Activated T-helper 2 cell treated with anti-CD3 and anti-CD28 coated beads, Interferon-gamma antibody, Interleukin-2, Interleukin-4, amounts not matched to agents 10 μg/mL and 5 μg/mL and 100 μg/mL, durations not matched to agents 14 hours and 24 hours and 36 hours (primary cell): ENCODE measurements at regions of chr10 and their contacts with region 1.

Region 1: DNA sequence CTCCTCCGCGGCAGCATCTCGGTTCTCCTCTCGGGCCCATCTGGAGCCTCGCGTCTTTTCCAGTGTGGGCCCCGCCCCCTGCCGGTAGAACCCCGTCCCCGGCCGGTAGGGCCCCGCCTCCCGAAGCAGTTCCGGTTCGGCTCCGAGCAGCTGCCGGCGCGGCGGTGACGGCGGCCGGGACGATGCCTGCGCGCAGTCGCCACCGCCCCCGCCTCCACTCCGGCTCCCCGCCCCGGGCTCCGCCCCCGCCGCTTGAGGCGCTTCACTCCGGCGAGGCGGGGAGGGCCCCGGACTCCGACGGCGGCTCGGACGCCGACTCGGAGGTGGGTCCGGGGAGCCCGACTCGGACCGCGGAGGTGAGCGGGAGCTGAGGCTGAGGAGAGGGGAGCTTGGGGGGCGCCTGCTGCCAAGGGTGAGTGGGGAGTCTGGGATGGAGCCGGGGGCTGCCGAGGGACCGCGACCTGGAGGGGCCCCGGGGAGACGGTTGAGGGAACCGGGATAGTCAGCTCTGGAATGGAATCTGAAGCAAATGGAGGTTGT is at the start of gene SAMD8:
- DNase-seq: peak; percentile 97
- H3K4me3 Mint-ChIP-seq: peak within 1 kb of the TSS; percentile 89
- H3K27ac Mint-ChIP-seq: peak within 1 kb of the TSS; percentile 90
- H3K4me1 Mint-ChIP-seq: peaks cover 43% of the 10 kb centered on the region
- H3K27me3 Mint-ChIP-seq: no peaks in the 10 kb centered on the region
- total RNA-seq, gene SAMD8: 14.9 and 15.6 TPM in 2 replicates

Region 2: GRCh38 chr10:74176380-74177139 is 934.9 kb before region 1 on chr10:
- intact Hi-C with region 1: loop called (anchors 5 kb)
- DNase-seq: peak; percentile 96
- H3K4me3 Mint-ChIP-seq: peak overlapping the region; percentile 92
- H3K27ac Mint-ChIP-seq: peak overlapping the region; percentile 97
- H3K4me1 Mint-ChIP-seq: peaks cover 43% of the 10 kb centered on the region
- H3K27me3 Mint-ChIP-seq: no peaks in the 10 kb centered on the region

Region 3: DNA sequence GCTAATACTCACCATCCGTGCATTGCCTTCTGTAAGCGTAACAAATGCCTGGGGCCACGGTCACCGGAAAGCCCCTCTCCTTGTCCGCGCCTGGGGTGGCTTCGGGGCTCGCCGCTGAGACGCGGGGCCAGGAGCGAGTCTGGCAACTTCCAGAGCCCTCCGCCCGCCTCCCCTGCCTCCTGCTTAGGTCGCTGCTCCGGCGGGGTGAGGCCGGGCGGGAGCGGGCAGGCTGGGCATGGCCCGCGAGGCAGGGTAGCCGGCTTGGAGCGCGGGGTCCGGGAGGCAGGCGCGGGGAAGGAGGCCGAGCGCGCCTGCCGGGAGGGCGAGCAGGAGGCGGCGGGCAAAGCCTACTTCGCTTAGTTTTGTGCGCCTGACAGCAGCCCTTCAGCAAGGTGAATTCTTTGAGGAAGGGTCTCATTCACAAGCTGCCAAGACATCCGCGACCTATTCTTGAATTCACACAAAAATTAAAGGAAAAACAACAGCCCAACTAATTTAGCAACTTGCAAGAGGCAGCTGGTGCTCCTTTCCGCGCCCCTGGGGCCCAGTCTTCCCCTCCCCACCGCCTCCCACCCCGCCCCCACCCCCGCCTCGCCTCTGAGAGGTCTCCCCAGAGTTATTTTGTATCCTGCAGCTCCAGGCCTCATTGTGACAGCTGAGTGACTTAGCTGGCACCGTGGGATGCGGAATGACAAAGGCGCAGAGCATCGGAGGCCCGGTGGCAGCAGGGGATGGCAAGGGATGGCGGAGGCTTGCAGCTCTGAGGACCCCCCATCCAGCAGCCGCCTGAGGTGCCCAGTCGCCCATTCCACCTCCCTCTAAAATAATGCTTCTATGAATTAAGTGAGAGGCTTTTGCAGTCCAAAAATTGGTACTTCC is 297.8 kb before region 1 on chr10:
- intact Hi-C with region 1: no loop called
- DNase-seq: no peak
- H3K4me3 Mint-ChIP-seq: no peak overlapping the region
- H3K27ac Mint-ChIP-seq: no peak overlapping the region
- H3K4me1 Mint-ChIP-seq: peaks cover 6% of the 10 kb centered on the region
- H3K27me3 Mint-ChIP-seq: no peaks in the 10 kb centered on the region

Region 4: DNA sequence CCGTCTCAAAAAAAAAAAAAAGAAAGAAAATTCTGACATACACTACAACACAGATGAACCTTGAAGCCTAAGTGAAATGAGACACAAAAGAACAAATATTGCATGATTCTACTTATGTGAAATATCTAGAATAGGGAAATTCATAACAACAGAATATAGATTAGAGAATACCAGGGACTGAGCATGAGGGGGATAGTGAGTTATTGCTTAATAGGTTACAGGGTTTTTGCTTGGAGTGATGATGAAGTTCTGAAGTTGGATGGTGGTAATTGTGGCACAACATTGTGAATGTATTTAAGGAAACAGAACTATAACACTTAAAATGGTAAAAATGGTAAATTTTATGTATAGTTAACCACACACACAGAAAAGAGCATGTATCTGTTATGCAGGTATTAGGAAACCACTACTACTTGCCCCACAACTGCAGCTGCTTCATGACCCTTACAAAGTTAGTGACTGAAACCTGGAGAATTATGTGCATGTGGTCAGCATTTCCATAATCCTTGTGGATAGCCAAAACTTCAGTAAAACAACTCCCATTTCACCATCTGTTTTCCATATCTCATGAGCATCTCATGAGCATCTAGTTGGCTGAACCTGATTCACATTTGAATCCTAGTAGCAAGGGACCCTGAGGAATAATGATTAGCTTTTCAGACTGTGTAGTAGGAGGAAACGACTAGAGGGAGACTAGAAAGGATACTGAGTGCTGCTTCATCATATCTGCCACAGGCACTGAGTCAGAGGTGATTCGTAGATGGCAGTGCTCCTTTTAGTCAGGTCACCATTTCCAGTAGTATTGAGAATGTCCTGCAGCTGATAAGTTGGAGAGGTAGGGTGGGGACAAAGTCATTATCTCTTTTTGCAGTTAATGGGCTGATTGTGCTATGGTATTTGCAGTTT is 26.3 kb after region 1 on chr10:
- intact Hi-C with region 1: loop called (anchors 1 kb)
- DNase-seq: no peak
- H3K4me3 Mint-ChIP-seq: no peak overlapping the region
- H3K27ac Mint-ChIP-seq: peak overlapping the region; percentile 33
- H3K4me1 Mint-ChIP-seq: peaks cover 24% of the 10 kb centered on the region
- H3K27me3 Mint-ChIP-seq: no peaks in the 10 kb centered on the region

Region 5: GRCh38 chr10:75165684-75166622 is 54.5 kb after region 1 on chr10:
- intact Hi-C with region 1: loop called (anchors 2 kb)
- DNase-seq: no peak
- H3K4me3 Mint-ChIP-seq: peak overlapping the region; percentile 49
- H3K27ac Mint-ChIP-seq: peak overlapping the region; percentile 90
- H3K4me1 Mint-ChIP-seq: peaks cover 25% of the 10 kb centered on the region
- H3K27me3 Mint-ChIP-seq: no peaks in the 10 kb centered on the region

Region 6: DNA sequence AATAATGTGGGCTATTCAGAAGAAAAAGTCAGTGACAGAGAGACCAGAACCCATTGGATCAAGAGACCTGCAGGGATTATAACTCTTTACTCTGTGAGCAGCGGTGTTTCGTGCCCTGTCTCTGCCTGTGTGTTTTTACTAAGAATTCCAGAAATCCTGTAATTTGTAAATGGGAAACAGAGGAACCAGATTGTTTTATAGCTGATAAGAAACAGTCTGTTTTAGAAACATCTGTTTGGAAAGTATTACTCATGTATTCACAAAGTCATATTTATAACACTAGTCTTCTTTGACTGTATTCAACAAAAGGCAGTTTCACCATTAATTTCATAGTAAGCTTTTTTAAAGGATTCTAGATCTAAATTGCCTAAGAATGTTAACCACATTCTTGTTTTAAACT is 69.2 kb after region 1 on chr10:
- intact Hi-C with region 1: loop called (anchors 2 kb)
- DNase-seq: no peak
- H3K4me3 Mint-ChIP-seq: no peak overlapping the region
- H3K27ac Mint-ChIP-seq: peak overlapping the region; percentile 46
- H3K4me1 Mint-ChIP-seq: peaks cover 27% of the 10 kb centered on the region
- H3K27me3 Mint-ChIP-seq: no peaks in the 10 kb centered on the region

Region 7: GRCh38 chr10:75210282-75211006 is 99.0 kb after region 1 on chr10 and contains the start of gene VDAC2:
- intact Hi-C with region 1: loop called (anchors 1 kb)
- DNase-seq: peak; percentile 95
- H3K4me3 Mint-ChIP-seq: peak within 1 kb of the TSS; percentile 97
- H3K27ac Mint-ChIP-seq: peak within 1 kb of the TSS; percentile 100
- H3K4me1 Mint-ChIP-seq: peaks cover 32% of the 10 kb centered on the region
- H3K27me3 Mint-ChIP-seq: no peaks in the 10 kb centered on the region
- total RNA-seq, gene VDAC2: 219 and 221 TPM in 2 replicates

Region 8: GRCh38 chr10:75235375-75236177 is 124.1 kb after region 1 on chr10 and contains the start of gene COMTD1:
- intact Hi-C with region 1: loop called (anchors 1 kb)
- DNase-seq: peak; percentile 92
- H3K4me3 Mint-ChIP-seq: peak within 1 kb of the TSS; percentile 81
- H3K27ac Mint-ChIP-seq: peak within 1 kb of the TSS; percentile 70
- H3K4me1 Mint-ChIP-seq: peaks cover 16% of the 10 kb centered on the region
- H3K27me3 Mint-ChIP-seq: no peaks in the 10 kb centered on the region
- total RNA-seq, gene COMTD1: 38.5 and 38.7 TPM in 2 replicates

Region 9: GRCh38 chr10:75887992-75888680 is 776.7 kb after region 1 on chr10:
- intact Hi-C with region 1: no loop called
- DNase-seq: no peak
- H3K4me3 Mint-ChIP-seq: no peak overlapping the region
- H3K27ac Mint-ChIP-seq: no peak overlapping the region
- H3K4me1 Mint-ChIP-seq: no peaks in the 10 kb centered on the region
- H3K27me3 Mint-ChIP-seq: no peaks in the 10 kb centered on the region